ENCODE measurements at regions of chr1 and their contacts with region 1.

Region 1: DNA sequence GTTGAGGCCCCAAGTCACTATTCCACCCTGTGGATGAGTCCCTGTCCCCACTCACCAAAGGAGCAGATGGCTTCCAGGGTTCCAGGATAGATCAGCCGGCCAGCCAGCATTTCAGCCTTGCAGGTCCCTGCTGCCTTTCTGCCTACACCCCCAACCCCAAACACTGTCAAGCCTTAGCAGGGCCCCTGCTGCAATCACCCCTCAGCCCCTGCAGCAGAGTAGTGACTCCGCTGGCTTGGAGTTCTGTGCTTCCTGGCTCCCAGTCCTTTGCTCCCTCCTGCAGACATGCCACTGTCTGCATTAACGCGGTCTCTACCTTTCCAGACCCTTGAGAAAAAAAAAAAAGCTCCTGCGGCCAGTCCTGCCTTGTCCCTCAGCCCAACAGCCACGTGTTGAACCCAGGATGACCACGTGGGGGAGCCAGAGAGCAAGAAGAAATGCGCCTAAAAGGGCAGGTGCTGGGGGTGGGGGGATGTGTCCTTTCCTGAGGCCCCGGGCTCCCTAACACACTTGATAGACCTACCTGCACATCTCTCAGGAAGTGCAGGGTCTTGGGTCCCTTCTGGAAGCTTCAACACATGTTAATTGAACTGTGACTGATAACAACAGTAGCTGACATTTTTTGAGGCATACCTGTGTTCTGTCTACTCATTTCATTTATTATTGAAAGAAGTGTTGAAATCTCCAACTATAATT is 37.4 kb downstream of the RASSF5 start:
- DNase-seq: peak; percentile 96
- H3K4me3 Mint-ChIP-seq: no peak overlapping the region
- H3K27ac Mint-ChIP-seq: peak overlapping the region; percentile 66
- H3K4me1 Mint-ChIP-seq: peaks cover 17% of the 10 kb centered on the region
- H3K27me3 Mint-ChIP-seq: no peaks in the 10 kb centered on the region

Region 2: GRCh38 chr1:206489980-206490770 is 54.5 kb before region 1 on chr1:
- intact Hi-C with region 1: loop called (anchors 2 kb)
- DNase-seq: peak; percentile 89
- H3K4me3 Mint-ChIP-seq: no peak overlapping the region
- H3K27ac Mint-ChIP-seq: no peak overlapping the region
- H3K4me1 Mint-ChIP-seq: peaks cover 13% of the 10 kb centered on the region
- H3K27me3 Mint-ChIP-seq: no peaks in the 10 kb centered on the region

Region 3: GRCh38 chr1:206556750-206557635 is 12.3 kb after region 1 on chr1:
- intact Hi-C with region 1: loop called (anchors 1 kb)
- DNase-seq: peak; percentile 97
- H3K4me3 Mint-ChIP-seq: peak overlapping the region; percentile 98
- H3K27ac Mint-ChIP-seq: peak overlapping the region; percentile 93
- H3K4me1 Mint-ChIP-seq: peaks cover 69% of the 10 kb centered on the region
- H3K27me3 Mint-ChIP-seq: no peaks in the 10 kb centered on the region

Region 4: GRCh38 chr1:206563367-206564207 is 18.9 kb after region 1 on chr1:
- intact Hi-C with region 1: loop called (anchors 2 kb)
- DNase-seq: no peak
- H3K4me3 Mint-ChIP-seq: peak overlapping the region; percentile 98
- H3K27ac Mint-ChIP-seq: peak overlapping the region; percentile 94
- H3K4me1 Mint-ChIP-seq: peaks cover 90% of the 10 kb centered on the region
- H3K27me3 Mint-ChIP-seq: no peaks in the 10 kb centered on the region

Region 5: DNA sequence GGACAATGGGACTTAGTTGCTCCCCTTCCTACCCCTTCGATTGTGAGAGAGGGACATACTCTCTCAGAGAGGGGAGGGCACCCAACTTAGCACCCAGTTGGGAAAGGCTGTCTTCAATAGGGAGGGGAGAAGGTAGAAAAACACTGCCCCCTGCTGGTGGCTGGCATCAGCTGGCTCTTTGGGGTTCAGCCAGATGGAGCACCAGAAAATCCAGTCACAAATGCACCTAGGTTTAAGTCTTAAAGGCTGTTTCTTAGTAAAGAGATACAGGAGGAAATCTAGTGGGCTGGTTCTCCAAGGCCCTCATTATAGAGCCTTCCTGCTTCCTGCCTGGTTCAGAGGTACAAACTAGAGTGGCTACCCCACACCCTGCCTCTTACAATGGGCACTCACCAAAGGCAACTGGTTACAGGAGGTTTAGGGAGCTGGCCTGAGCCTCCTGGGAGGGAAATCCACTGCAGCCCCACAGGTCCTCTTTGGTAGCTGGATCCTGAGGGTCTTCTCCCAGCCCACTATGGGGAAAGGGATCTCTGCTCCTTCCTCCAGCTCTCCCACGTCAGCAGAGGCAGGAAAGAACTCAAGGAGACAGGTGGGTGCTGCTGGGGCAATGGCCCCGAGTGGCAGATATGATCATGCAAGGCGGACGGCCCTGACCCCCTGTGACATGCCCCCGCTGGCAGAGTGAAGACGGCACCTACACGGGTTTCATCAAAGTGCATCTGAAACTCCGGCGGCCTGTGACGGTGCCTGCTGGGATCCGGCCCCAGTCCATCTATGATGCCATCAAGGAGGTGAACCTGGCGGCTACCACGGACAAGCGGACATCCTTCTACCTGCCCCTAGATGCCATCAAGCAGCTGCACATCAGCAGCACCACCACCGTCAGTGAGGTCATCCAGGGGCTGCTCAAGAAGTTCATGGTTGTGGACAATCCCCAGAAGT is 39.3 kb after region 1 on chr1:
- intact Hi-C with region 1: loop called (anchors 1 kb)
- DNase-seq: peak; percentile 94
- H3K4me3 Mint-ChIP-seq: peak overlapping the region; percentile 84
- H3K27ac Mint-ChIP-seq: peak overlapping the region; percentile 100
- H3K4me1 Mint-ChIP-seq: peaks cover 83% of the 10 kb centered on the region
- H3K27me3 Mint-ChIP-seq: no peaks in the 10 kb centered on the region

Region 6: DNA sequence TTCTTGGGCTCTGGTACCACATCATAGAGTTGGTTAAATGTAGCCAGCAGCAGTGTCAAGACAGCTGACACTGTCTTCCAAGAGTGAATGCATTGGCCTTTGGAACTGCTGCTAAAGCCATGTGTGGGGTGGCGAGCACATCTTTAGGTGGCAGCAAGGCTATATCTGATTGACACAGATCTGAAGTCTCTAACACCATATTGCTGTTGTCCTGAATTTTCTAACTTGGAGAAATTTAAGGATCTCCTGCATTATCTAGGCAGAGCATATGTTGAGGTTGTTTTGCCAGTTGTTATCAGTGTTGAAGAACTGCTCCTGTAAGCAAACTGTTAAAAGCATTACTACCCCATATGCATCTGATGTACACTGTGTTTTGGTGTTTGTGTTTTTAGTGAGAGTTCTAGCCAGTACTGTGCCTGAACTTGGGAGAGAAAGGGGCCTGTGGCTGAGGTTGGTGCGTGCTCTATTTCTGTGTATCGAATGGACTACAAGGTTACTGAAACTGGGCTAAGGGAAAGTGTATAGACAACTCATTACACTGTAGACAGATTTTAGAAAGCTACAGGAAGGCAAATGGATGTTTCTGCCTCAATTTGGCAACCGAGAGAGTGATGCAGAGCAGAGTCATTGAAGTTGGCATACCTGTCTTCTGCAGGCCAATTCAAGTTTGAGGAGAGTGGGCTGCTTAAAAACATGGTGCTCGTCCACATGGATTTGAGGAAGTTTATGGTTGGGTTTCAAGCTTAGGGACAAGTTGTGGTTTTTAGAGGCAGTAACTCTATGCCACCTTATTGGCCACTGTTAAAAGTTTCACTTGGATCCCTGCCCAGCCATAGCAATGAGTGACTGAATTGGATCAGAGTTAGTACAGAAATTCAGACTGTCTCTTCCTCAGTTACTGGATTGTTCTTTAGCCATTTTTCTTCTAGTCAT is 107.5 kb after region 1 on chr1:
- intact Hi-C with region 1: no loop called
- DNase-seq: no peak
- H3K4me3 Mint-ChIP-seq: no peak overlapping the region
- H3K27ac Mint-ChIP-seq: no peak overlapping the region
- H3K4me1 Mint-ChIP-seq: peaks cover 7% of the 10 kb centered on the region
- H3K27me3 Mint-ChIP-seq: peaks cover under 1% of the 10 kb centered on the region

Region 7: GRCh38 chr1:206725109-206725963 is 180.6 kb after region 1 on chr1:
- intact Hi-C with region 1: no loop called
- DNase-seq: peak; percentile 89
- H3K4me3 Mint-ChIP-seq: no peak overlapping the region
- H3K27ac Mint-ChIP-seq: peak overlapping the region; percentile 17
- H3K4me1 Mint-ChIP-seq: peaks cover 39% of the 10 kb centered on the region
- H3K27me3 Mint-ChIP-seq: no peaks in the 10 kb centered on the region

Measured in activated CD4-positive, alpha-beta T cell treated with anti-CD3 and anti-CD28 coated beads, Interleukin-2, amount 10 ng/mL, durations not matched to agents 24 days and 14 days (primary cell).